Activated T-helper 2 cell treated with anti-CD3 and anti-CD28 coated beads, Interferon-gamma antibody, Interleukin-2, Interleukin-4, amounts not matched to agents 10 μg/mL and 5 μg/mL and 100 μg/mL, durations not matched to agents 14 hours and 24 hours and 36 hours (primary cell): ENCODE measurements at regions of chr2 and their contacts with region 1.

Region 1: DNA sequence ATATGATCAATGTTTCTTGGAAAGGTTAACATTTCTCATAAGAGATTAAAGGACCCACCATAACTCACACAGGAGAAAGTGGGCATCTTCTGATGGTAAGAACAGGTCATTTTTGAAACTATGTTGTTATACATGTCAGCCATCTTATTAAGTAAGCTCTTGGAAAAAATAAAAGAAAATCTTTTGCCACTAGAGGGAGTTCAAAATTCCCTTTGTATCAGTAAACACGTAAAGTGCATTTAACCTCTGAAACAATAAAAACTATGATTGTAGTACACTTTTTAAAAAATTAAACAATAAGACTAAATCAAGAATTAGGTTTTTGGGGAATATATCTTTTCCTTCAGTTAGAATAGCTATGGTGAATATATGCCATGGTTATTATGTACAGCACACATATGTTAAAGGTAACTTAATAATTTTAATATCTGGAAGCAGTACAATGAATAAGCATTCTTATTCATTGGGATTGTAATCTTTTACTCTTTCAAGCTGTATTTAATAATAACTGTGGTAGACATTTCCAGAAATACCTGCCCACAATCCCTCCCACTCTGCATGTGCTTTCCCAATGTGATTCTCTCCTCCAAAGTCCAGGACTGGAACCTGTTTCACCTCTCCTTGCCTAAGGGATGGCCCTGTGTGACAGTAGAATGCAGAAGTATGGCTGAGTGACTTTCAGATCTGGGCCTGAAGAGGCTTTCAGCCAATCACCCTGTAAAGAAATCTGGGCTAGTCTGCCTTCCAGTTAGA is 64.2 kb downstream of the RBMS1 start:
- DNase-seq: no peak
- H3K4me3 Mint-ChIP-seq: no peak overlapping the region
- H3K27ac Mint-ChIP-seq: no peak overlapping the region
- H3K4me1 Mint-ChIP-seq: peaks cover 58% of the 10 kb centered on the region
- H3K27me3 Mint-ChIP-seq: no peaks in the 10 kb centered on the region

Region 2: GRCh38 chr2:160394153-160394552 is 35.3 kb before region 1 on chr2:
- intact Hi-C with region 1: loop called (anchors 5 kb)
- DNase-seq: no peak
- H3K4me3 Mint-ChIP-seq: peak overlapping the region; percentile 49
- H3K27ac Mint-ChIP-seq: peak overlapping the region; percentile 53
- H3K4me1 Mint-ChIP-seq: peaks cover 33% of the 10 kb centered on the region
- H3K27me3 Mint-ChIP-seq: no peaks in the 10 kb centered on the region

Region 3: GRCh38 chr2:160472839-160473251 is 43.4 kb after region 1 on chr2:
- intact Hi-C with region 1: loop called (anchors 2 kb)
- DNase-seq: no peak
- H3K4me3 Mint-ChIP-seq: no peak overlapping the region
- H3K27ac Mint-ChIP-seq: no peak overlapping the region
- H3K4me1 Mint-ChIP-seq: peaks cover 50% of the 10 kb centered on the region
- H3K27me3 Mint-ChIP-seq: no peaks in the 10 kb centered on the region

Region 4: DNA sequence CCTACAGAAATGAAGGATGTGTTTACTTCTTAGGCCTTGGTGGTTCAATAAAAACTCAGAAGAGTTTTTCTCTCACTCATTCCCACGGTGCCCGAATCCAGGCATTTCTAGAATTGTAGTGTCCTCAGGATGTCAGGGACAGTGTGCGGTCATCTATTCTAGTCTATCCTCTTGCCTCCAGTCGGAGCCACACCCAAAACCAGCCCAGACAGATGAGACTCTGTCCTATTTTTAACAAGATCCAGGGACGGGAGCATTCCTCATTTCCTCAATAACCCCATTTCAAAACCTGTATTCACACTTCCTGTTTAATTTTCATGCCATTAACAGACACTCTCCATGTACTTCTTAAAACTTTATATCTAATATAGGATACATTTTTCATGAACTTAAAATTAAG is 75.8 kb after region 1 on chr2:
- intact Hi-C with region 1: loop called (anchors 1 kb)
- DNase-seq: no peak
- H3K4me3 Mint-ChIP-seq: no peak overlapping the region
- H3K27ac Mint-ChIP-seq: no peak overlapping the region
- H3K4me1 Mint-ChIP-seq: peaks cover 21% of the 10 kb centered on the region
- H3K27me3 Mint-ChIP-seq: peaks cover 18% of the 10 kb centered on the region